ENCODE measurements at regions of chr13 and their contacts with region 1.

Region 1: GRCh38 chr13:19633479-19634255 is at the start of gene MPHOSPH8:
- DNase-seq: peak; percentile 98
- ATAC-seq: peak; percentile 97
- H3K4me3 ChIP-seq: peak within 1 kb of the TSS; percentile 84 to 98 (median 88)
- H3K4me3 Mint-ChIP-seq: peak within 1 kb of the TSS; percentile 100
- H3K27ac ChIP-seq: peak within 1 kb of the TSS; percentile 74 to 90
- H3K27ac Mint-ChIP-seq: peak within 1 kb of the TSS; percentile 99
- H3K4me1 ChIP-seq: peaks cover 15 to 25% of the 10 kb centered on the region in 2 donors
- H3K4me1 Mint-ChIP-seq: peaks cover 36% of the 10 kb centered on the region
- H3K27me3 ChIP-seq: no peaks in the 10 kb centered on the region
- H3K27me3 Mint-ChIP-seq: no peaks in the 10 kb centered on the region
- CTCF ChIP-seq: no peak
- total RNA-seq, gene MPHOSPH8: 98.3 and 106 TPM in 2 replicates

Region 2: DNA sequence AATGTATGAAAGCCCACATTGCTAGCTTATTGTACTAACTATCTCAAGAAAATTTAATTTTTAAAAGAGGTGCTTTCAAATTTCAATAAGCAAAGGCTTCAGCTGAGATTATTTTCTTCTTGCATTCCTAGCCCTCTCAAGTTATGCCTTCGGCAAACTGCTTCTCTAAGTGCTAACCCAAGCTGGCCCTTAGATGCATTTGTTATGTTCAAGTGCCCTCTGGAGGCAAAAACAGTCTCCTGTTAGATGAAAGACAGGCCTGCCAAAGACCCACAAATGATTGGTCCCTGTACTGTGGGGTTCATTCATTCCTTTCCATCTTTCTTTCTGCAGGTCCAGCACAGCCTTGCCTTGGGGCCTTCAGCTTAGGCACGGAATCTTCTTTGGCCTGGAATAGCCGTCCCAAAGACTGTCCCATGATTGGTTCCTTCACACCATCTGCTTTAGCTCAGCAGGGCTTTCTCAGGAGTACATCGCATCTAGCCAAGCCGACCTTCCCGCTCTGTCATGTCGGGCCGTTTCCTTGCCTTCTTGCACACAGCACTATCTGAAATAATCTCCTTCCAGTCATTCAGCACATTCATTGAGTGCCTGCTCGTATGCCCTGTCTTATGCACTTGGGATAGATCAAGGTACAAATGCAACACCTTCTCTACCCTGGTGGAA is 45.9 kb before region 1 on chr13:
- CTCF ChIA-PET with region 1: no interaction called
- POLR2A ChIA-PET with region 1: no interaction called
- intact Hi-C with region 1: loop called (anchors 1 kb)
- DNase-seq: peak; percentile 39
- ATAC-seq: peak; percentile 44
- H3K4me3 ChIP-seq: peak overlapping the region in 1 of 5 experiments; percentile 67
- H3K4me3 Mint-ChIP-seq: peak overlapping the region; percentile 82
- H3K27ac ChIP-seq: no peak overlapping the region
- H3K27ac Mint-ChIP-seq: peak overlapping the region; percentile 75
- H3K4me1 ChIP-seq: peaks cover 17 to 18% of the 10 kb centered on the region in 2 donors
- H3K4me1 Mint-ChIP-seq: peaks cover 23% of the 10 kb centered on the region
- H3K27me3 ChIP-seq: peaks cover 0 to 4% (median 3%) of the 10 kb centered on the region in 4 experiments
- H3K27me3 Mint-ChIP-seq: peaks cover 14% of the 10 kb centered on the region
- CTCF ChIP-seq: no peak

Region 3: GRCh38 chr13:19863323-19864023 is 229.8 kb after region 1 on chr13 and contains the start of gene ZMYM5:
- CTCF ChIA-PET with region 1: no interaction called
- POLR2A ChIA-PET with region 1: interaction called, 9 read pairs
- intact Hi-C with region 1: loop called (anchors 1 kb)
- DNase-seq: peak; percentile 97
- ATAC-seq: peak; percentile 88
- H3K4me3 ChIP-seq: peak within 1 kb of the TSS; percentile 71 to 95 (median 83)
- H3K4me3 Mint-ChIP-seq: peak within 1 kb of the TSS; percentile 93
- H3K27ac ChIP-seq: peak within 1 kb of the TSS; percentile 92 to 94
- H3K27ac Mint-ChIP-seq: peak within 1 kb of the TSS; percentile 97
- H3K4me1 ChIP-seq: peaks cover 22 to 26% of the 10 kb centered on the region in 2 donors
- H3K4me1 Mint-ChIP-seq: peaks cover 31% of the 10 kb centered on the region
- H3K27me3 ChIP-seq: no peaks in the 10 kb centered on the region
- H3K27me3 Mint-ChIP-seq: no peaks in the 10 kb centered on the region
- CTCF ChIP-seq: no peak
- total RNA-seq, gene ZMYM5: 23.0 and 26.8 TPM in 2 replicates

Region 4: GRCh38 chr13:21176220-21176982 is 1542.7 kb after region 1 on chr13 and contains the starts of genes MRPL57 and SKA3:
- CTCF ChIA-PET with region 1: no interaction called
- POLR2A ChIA-PET with region 1: no interaction called
- intact Hi-C with region 1: loop called (anchors 10 kb)
- DNase-seq: peak; percentile 95
- ATAC-seq: peak; percentile 93
- H3K4me3 ChIP-seq: peak within 1 kb of the TSS; percentile 67 to 97 (median 94)
- H3K4me3 Mint-ChIP-seq: peak within 1 kb of the TSS; percentile 98
- H3K27ac ChIP-seq: peak within 1 kb of the TSS; percentile 82 to 85
- H3K27ac Mint-ChIP-seq: peak within 1 kb of the TSS; percentile 97
- H3K4me1 ChIP-seq: peaks cover 11 to 15% of the 10 kb centered on the region in 2 donors
- H3K4me1 Mint-ChIP-seq: peaks cover 15% of the 10 kb centered on the region
- H3K27me3 ChIP-seq: no peaks in the 10 kb centered on the region
- H3K27me3 Mint-ChIP-seq: no peaks in the 10 kb centered on the region
- CTCF ChIP-seq: peak; percentile 22
- total RNA-seq, gene MRPL57: 9.7 and 12.1 TPM in 2 replicates
- total RNA-seq, gene SKA3: 0.20 and 0.53 TPM in 2 replicates

Measured in B cell (primary cell).